ENCODE measurements at regions of chr5 and their contacts with region 1.

Region 1: GRCh38 chr5:143521846-143522245 is 118.4 kb upstream of the NR3C1 start:
- DNase-seq: no peak
- H3K4me3 ChIP-seq: no peak overlapping the region
- H3K27ac ChIP-seq: no peak overlapping the region
- H3K4me1 ChIP-seq: peaks cover under 1% of the 10 kb centered on the region
- CTCF ChIP-seq: no peak

Region 2: DNA sequence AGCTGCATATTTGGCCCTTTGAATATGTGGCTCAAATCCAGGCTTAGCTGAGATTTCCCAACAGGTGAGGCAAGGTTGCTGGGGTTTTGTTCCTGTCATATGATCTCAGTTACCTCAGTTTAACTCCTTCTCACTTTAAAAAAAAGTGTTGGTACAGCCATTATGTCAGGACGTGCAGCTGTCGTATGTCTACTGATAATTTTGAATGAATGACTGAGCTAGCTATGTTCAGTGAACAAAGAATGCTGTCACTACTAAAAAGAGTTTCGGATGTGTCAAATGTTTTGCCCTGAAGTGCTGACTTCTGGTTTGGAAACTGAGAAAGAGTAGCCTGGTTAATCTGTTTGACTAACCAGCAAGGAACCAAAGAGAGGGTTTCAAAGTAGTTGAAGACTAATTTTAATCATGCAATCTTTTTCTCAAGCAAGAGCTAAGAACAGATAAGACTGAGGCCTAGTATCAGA is 12.1 kb before region 1 on chr5:
- CTCF ChIA-PET with region 1: no interaction called
- POLR2A ChIA-PET with region 1: interaction called, 15 read pairs
- intact Hi-C with region 1: no loop called
- DNase-seq: no peak
- H3K4me3 ChIP-seq: no peak overlapping the region
- H3K27ac ChIP-seq: no peak overlapping the region
- H3K4me1 ChIP-seq: no peaks in the 10 kb centered on the region
- CTCF ChIP-seq: no peak

Region 3: DNA sequence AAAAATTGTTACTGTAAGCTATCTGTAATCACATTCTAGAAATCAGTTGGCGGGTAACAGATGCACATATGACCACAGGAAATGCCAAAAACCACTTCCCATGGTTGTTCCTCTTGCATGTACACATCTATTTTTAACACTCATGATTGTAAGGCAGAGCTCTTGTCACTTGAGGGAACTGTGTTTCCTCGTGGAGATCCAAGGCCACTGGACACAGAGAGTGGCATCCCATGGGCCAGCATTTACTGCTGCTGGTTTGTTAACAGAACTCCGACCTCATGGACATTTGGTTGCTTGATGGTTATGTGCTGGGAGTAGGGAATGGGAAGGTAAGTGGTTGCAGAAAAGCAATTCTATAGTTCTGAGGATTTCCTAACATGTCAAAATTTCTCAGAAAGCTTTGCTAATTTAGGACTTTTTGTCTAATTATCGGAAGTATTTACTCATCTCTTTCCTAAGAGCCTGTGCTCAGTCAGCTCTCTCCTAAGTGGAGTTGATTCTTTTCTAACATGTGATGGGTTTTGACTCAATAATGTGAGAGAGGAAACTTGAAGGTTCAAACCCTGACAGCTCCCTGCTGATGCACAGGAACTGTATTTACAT is 83.7 kb after region 1 on chr5:
- CTCF ChIA-PET with region 1: no interaction called
- POLR2A ChIA-PET with region 1: no interaction called
- intact Hi-C with region 1: no loop called
- DNase-seq: peak; percentile 85
- H3K4me3 ChIP-seq: peak overlapping the region; percentile 44
- H3K27ac ChIP-seq: peak overlapping the region; percentile 52
- H3K4me1 ChIP-seq: peaks cover 23% of the 10 kb centered on the region
- CTCF ChIP-seq: no peak